AG04449 (cell line): ENCODE measurements at regions of chr3 and their contacts with region 1.

Region 1: DNA sequence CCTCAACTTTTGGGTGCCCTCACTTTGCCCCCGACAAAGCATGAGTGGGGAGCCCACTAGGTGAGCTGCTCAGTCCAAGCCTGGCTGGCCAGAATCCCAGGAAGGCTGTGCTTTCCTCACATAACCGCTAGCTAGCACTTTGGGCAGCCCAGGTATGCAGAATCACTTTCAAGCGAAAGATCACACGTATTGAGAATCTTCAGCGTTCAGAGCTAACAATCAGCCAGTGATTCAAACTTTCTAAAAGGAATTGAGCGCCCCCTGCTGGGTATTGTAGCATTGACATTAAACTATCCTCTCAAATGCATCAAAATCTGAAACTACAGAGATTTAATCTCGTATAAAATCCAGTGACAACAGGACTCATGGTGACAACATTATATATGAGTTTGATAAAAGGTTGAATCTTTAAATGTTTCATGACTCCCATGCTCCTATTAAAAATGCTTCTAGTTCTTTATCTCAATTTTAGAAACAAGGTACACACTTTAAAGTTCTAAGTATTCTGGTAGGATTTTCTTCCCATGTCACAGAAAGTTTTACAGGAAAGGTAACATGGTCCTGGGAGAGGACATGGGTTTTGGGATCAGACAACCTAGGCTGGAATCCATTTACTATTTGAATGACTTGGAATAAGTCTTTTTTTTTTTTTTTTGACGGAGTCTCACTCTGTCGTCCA is 11.8 kb downstream of the ANAPC13 start:
- DNase-seq: peak; percentile 56
- H3K4me3 ChIP-seq: no peak overlapping the region
- CTCF ChIP-seq: peak; percentile 45

Region 2: GRCh38 chr3:134326760-134327593 is 147.0 kb before region 1 on chr3:
- CTCF ChIA-PET with region 1: interaction called, 690 read pairs
- POLR2A ChIA-PET with region 1: interaction called, 3 read pairs
- DNase-seq: peak; percentile 99
- H3K4me3 ChIP-seq: peak overlapping the region; percentile 2; the same call in 1 of the 2 replicates
- CTCF ChIP-seq: no peak

Region 3: GRCh38 chr3:134337511-134338195 is 136.4 kb before region 1 on chr3:
- CTCF ChIA-PET with region 1: interaction called, 13 read pairs
- POLR2A ChIA-PET with region 1: no interaction called
- DNase-seq: no peak
- H3K4me3 ChIP-seq: no peak overlapping the region
- CTCF ChIP-seq: no peak

Region 4: DNA sequence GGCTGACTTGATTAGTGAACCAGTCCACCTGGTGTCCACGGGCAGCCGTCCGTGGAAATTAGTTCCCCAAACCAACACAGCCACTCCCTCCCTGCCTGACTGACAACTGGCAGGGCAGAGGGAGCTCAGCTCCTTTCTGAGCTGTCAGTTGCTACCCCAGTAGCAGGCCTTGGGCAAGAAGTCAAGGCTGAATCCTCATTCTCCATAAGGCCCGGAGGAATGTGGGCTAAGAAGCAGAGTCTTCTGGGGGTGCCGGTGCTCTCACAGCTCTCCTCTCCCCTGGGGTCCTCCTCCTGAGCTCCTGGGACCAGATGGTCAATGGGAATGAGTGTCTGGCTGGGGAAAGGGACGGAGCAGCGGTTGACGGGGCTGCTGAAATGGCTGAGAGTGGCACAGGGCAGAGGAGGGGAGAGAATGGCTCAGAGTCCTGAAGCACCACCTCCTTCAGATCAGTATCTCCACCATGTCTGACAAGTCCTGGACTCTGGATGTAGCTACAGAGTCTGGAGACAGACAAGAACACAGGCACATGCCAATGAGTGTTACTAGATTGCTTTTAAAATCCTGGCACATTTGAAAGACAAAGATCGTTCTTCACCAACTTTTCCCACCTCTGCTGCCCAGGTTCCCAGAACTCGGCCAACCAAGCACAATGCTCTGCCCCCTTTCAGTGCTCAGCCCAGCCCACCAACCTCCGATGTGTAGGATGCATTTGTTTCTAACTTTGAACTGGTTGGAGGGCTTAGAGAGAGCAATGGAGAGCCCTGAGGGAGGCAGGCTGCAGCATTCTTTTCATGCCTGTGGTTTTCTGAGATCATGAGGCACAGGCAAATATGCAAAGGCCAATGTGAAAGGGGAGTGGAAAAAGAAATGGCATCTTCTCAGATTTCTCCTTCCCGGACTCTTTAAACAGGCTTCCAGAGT is 116.5 kb before region 1 on chr3:
- CTCF ChIA-PET with region 1: interaction called, 424 read pairs
- POLR2A ChIA-PET with region 1: interaction called, 172 read pairs
- DNase-seq: peak; percentile 88
- H3K4me3 ChIP-seq: no peak overlapping the region; the same call in 1 of the 2 replicates
- CTCF ChIP-seq: no peak

Region 5: DNA sequence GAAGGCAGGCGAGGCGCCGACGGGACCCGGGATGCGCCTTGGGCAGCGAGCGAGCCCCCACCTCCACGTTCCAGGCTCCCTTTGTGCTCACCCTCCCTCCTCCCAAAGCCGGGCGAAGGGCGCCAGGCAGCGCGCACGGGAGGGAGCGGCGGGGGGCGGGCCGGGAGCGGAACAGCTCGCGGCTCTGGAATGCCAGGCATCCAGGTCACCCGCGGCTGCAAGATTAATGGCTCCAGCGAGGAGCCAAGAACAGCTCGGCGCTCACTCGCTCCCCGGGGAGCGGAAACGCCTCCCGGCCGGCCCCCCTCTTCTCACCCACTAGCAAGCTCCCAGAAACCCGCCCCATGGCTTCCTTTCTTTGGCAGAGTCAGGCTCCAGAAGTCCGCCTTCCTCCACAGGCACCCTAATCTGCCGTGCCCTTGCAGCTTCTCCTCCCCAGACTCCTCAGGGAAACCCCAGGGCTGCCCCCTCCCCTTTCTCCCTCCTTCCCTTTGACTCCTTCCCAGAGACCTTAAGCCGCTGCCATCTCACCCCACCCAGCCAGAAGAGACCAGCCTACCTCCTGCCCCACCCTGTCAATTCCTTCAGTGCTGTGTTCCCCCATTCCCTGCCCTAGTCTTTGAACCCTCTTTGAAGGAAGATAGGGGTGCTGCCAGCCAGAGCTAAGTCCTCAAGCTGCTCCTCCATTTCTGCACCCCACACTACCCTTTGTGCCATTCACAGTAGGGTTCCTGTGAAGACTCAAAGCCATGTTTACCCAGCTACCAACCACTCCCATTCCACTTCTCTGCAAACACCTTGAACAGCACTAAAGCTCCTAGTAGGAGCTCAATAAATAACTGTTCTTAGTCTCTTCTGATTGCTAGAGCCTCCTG is 109.7 kb before region 1 on chr3:
- CTCF ChIA-PET with region 1: interaction called, 424 read pairs
- POLR2A ChIA-PET with region 1: interaction called, 172 read pairs
- DNase-seq: peak; percentile 95
- H3K4me3 ChIP-seq: peak overlapping the region; percentile 42
- CTCF ChIP-seq: no peak

Region 6: GRCh38 chr3:134485718-134486576 is 11.9 kb after region 1 on chr3 and contains the starts of genes ANAPC13 and CEP63:
- CTCF ChIA-PET with region 1: interaction called, 75 read pairs
- POLR2A ChIA-PET with region 1: interaction called, 3 read pairs
- DNase-seq: peak; percentile 96
- H3K4me3 ChIP-seq: peak within 1 kb of the TSS; percentile 82
- CTCF ChIP-seq: no peak